ENCODE measurements at regions of chr10 and their contacts with region 1.

Region 1: DNA sequence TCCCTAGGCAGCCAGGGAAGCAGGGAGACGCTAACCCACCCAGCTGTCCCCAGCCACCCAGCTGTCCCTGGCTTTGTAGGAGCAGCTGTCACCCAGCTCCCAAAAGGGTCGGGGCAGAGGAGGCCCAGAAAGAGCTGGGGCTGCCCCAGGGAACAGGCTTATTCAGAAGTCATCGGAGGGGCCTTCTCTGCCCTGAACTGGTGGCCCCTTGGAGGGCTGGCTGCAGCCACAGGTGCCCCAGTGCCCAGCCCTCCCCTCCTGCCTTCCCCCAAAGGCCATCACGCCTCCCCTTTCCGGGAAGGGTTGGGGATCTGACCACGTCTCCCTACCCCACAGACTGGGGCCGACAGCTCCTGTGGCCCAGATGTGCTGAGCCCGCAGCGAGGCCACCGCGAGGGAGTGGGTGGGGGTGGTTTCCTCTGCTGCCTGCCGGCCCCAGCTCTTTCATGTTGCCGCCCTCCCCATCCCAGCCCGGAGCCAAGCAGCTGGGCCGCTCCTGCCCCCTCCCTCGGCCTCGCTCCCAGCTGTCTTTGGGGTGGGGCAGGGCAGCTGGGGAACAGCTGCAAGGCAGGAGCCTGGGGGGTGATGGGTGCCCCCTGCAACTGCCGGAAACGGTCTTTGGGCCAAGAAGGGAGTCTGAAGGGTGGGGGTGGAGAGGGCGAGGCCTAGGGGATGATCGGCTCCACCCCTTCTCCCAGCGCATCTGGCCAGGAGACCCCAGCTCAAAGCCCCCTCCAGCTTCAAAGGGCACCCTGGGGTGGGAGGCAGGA is 16.8 kb downstream of the TRIM8 start:
- DNase-seq: peak; percentile 65
- H3K4me3 Mint-ChIP-seq: peak overlapping the region; percentile 63
- H3K27ac Mint-ChIP-seq: peak overlapping the region; percentile 90
- H3K4me1 Mint-ChIP-seq: peaks cover 28% of the 10 kb centered on the region
- H3K27me3 Mint-ChIP-seq: no peaks in the 10 kb centered on the region

Region 2: GRCh38 chr10:102546606-102547320 is 114.3 kb before region 1 on chr10:
- intact Hi-C with region 1: no loop called
- DNase-seq: no peak
- H3K4me3 Mint-ChIP-seq: no peak overlapping the region
- H3K27ac Mint-ChIP-seq: no peak overlapping the region
- H3K4me1 Mint-ChIP-seq: peaks cover 5% of the 10 kb centered on the region
- H3K27me3 Mint-ChIP-seq: no peaks in the 10 kb centered on the region

Region 3: GRCh38 chr10:102678842-102679289 is 17.8 kb after region 1 on chr10:
- intact Hi-C with region 1: no loop called
- DNase-seq: no peak
- H3K4me3 Mint-ChIP-seq: no peak overlapping the region
- H3K27ac Mint-ChIP-seq: no peak overlapping the region
- H3K4me1 Mint-ChIP-seq: peaks cover 40% of the 10 kb centered on the region
- H3K27me3 Mint-ChIP-seq: no peaks in the 10 kb centered on the region

Region 4: GRCh38 chr10:102702742-102703141 is 41.7 kb after region 1 on chr10:
- intact Hi-C with region 1: loop called (anchors 1 kb)
- DNase-seq: no peak
- H3K4me3 Mint-ChIP-seq: no peak overlapping the region
- H3K27ac Mint-ChIP-seq: peak overlapping the region; percentile 46
- H3K4me1 Mint-ChIP-seq: peaks cover 21% of the 10 kb centered on the region
- H3K27me3 Mint-ChIP-seq: no peaks in the 10 kb centered on the region

Region 5: DNA sequence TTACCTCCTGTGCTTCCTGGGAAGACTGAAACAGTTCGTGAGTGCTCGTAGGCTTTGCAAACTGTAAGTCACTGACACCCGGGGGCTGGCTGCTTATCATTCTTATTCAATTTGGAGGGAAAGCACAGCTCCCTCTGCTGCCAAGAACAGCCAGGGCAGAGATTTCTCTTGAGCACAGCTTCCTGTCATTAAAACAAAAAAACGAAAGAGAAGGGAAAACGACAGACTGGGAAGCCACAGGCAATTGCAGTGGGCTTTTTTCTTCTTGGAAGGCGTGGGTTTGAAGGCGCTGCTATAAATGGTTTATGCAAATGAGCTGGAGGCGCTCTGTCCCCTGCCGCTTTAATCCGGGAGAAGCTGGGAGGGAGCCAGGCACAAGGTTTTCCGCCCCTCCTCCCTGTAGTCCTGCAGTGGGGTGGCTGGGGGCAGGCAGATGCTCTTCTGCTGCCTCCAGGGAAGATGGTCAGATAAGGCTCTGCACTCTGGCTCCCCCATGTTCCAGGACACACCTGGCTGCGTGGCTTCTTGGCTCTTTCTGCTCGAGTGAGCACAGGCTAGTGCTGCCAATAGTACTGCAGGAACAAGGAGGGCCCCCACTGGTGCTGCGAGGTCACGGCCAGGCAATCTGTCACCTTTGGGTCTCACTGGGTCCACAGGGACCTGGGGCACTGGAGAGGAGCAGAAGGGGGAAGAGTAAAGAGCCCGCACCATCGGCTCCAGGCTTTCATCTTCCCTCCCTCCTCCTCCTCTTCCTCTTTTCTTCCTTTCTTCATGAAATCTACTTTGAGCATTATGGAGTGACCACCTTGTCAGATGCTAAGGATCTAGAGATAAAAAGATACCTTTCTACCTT is 881.9 kb after region 1 on chr10:
- intact Hi-C with region 1: no loop called
- DNase-seq: no peak
- H3K4me3 Mint-ChIP-seq: peak overlapping the region; percentile 45
- H3K27ac Mint-ChIP-seq: peak overlapping the region; percentile 3
- H3K4me1 Mint-ChIP-seq: peaks cover 15% of the 10 kb centered on the region
- H3K27me3 Mint-ChIP-seq: peaks cover 15% of the 10 kb centered on the region